Activated CD4-positive, alpha-beta T cell treated with anti-CD3 and anti-CD28 coated beads, Interleukin-2, amount 10 ng/mL, durations not matched to agents 24 days and 14 days (primary cell): ENCODE measurements at regions of chr3 and their contacts with region 1.

Region 1: GRCh38 chr3:71130471-71131374 is 452.8 kb downstream of the FOXP1 start:
- DNase-seq: peak; percentile 93
- H3K4me3 Mint-ChIP-seq: peak overlapping the region; percentile 96
- H3K27ac Mint-ChIP-seq: peak overlapping the region; percentile 98
- H3K4me1 Mint-ChIP-seq: peaks cover 55% of the 10 kb centered on the region
- H3K27me3 Mint-ChIP-seq: no peaks in the 10 kb centered on the region

Region 2: GRCh38 chr3:71064288-71064955 is 66.3 kb before region 1 on chr3:
- intact Hi-C with region 1: loop called (anchors 1 kb)
- DNase-seq: peak; percentile 92
- H3K4me3 Mint-ChIP-seq: no peak overlapping the region
- H3K27ac Mint-ChIP-seq: no peak overlapping the region
- H3K4me1 Mint-ChIP-seq: peaks cover 55% of the 10 kb centered on the region
- H3K27me3 Mint-ChIP-seq: no peaks in the 10 kb centered on the region

Region 3: DNA sequence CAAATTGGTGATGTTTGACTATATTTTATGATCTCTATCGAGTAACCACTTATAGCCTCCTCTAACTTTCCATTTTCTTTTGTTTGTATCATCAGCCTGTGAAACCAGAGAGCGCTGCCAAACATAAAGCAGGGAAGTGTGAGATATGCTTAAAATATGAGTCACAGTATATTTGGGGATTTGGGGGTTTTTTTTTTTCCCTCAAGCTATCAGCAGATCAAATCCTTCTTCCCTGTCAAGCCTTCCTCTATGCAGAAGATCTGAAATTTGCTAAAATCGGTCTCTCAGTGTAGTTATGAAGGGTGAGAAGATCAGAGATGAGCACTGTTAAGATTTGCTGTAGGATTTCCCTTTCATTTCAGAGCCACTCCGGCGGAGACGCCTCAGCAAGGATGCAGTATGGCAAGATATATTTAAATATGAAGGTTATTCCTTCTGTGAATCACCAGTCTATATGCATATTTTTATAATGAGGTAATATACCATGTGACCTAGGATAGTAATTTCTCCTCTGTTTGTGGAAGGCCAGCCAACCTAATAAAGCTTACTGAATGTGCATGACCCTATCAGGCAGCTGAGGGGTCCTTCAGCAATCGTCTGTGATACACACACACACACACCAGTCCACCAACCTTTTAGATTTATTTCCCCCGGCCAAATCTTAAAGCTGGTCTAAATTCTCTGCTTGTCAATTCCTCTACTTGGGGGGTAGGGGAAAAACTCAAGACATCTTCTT is 21.3 kb before region 1 on chr3:
- intact Hi-C with region 1: loop called (anchors 1 kb)
- DNase-seq: no peak
- H3K4me3 Mint-ChIP-seq: peak overlapping the region; percentile 2
- H3K27ac Mint-ChIP-seq: peak overlapping the region; percentile 38
- H3K4me1 Mint-ChIP-seq: peaks cover 55% of the 10 kb centered on the region
- H3K27me3 Mint-ChIP-seq: no peaks in the 10 kb centered on the region

Region 4: DNA sequence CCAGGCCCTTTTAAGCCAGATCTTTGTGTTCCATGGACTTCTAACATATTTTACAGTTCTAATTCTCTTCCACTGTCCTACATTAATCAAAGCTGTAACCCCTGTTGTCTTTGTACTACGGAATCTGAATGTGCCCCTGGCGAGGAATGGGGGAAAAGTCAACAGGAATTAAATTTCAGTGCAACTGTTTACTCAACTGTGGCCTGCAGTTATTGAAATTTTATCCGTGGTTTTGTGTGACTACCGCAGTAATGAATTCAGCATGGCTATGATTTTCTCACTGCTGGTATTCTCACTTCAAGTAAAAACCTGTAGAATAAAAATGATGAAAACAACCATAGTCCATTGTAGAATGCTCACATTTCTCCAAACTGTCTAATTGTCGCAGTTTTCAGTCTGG is 64.8 kb after region 1 on chr3:
- intact Hi-C with region 1: loop called (anchors 1 kb)
- DNase-seq: no peak
- H3K4me3 Mint-ChIP-seq: no peak overlapping the region
- H3K27ac Mint-ChIP-seq: no peak overlapping the region
- H3K4me1 Mint-ChIP-seq: peaks cover 25% of the 10 kb centered on the region
- H3K27me3 Mint-ChIP-seq: no peaks in the 10 kb centered on the region

Region 5: DNA sequence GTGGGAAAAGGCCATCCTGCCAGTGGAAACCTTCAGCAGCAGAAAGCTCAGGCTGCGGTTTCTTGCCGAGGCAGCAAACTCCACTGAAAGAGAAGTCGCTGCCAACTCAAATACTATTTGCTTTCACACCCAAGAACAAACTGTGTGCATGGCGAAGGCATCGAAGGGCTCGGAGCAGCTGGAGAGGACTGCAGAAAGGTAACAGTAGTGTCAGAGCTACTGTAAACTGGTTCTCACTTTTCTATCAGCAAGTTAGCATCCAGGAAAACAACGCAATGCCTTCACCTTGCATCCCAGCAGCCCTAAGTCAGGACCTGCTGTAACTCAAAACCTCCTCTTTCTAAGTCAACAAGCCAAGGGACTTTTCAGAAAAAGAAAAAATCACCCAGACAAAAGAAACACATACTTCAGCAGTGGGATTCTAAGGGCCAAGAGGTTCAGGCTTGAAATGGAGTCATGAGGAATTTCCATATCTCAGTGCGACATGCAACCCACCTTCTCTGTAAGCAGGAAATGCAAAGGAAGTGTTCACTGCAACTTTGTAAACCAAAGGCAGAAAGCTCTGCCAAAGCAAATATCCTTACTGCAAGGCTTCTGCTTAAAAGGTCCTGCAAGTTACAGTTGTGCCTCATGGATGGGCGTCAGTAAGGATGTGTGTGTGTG is 259.3 kb after region 1 on chr3:
- intact Hi-C with region 1: loop called (anchors 2 kb)
- DNase-seq: peak; percentile 69
- H3K4me3 Mint-ChIP-seq: peak overlapping the region; percentile 46
- H3K27ac Mint-ChIP-seq: peak overlapping the region; percentile 62
- H3K4me1 Mint-ChIP-seq: peaks cover 34% of the 10 kb centered on the region
- H3K27me3 Mint-ChIP-seq: peaks cover 31% of the 10 kb centered on the region